Head of caudate nucleus (tissue), 42 donors: ENCODE measurements at regions of chr7 and their contacts with region 1.

Region 1: GRCh38 chr7:152463709-152464311 is 28.0 kb upstream of the KMT2C start:
- DNase-seq: peak; percentile 99 to 100 (median 100)

Region 2: GRCh38 chr7:152436111-152436930 is 27.5 kb before region 1 on chr7:
- intact Hi-C with region 1: loop called (anchors 1 kb)
- DNase-seq: peak; percentile 77 to 97 (median 93)

Region 3: GRCh38 chr7:152675759-152676636 is 212.2 kb after region 1 on chr7 and contains the start of gene XRCC2:
- intact Hi-C with region 1: loop called (anchors 10 kb)
- DNase-seq: peak; percentile 75 to 95 (median 90)